ENCODE measurements at regions of chr1 and their contacts with region 1.

Region 1: DNA sequence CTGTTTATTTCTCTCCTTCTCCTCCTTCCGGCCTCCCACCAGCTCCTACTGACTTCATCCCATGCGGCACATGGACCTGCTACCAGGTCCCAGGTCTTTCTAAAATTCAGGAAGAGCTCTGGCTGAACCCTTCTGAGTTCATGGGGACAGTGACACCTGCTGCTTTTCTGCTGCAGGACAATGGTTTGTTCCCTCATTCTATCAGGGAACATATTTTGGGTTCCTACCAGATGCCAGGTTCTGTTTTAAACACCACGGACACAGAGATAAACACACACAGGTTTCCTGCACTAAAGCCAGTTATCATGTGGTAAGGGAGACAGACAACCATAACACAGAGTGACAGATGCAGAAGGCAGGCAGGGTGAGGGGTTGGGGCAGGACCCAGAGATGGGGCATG is 114.0 kb upstream of the RAB4A start:
- H3K4me3 Mint-ChIP-seq: no peak overlapping the region
- H3K27ac Mint-ChIP-seq: peak overlapping the region; percentile 88
- H3K4me1 Mint-ChIP-seq: peaks cover 73% of the 10 kb centered on the region
- H3K27me3 Mint-ChIP-seq: no peaks in the 10 kb centered on the region

Region 2: GRCh38 chr1:228664399-228664914 is 492.4 kb before region 1 on chr1:
- intact Hi-C with region 1: loop called (anchors 1 kb)
- H3K4me3 Mint-ChIP-seq: no peak overlapping the region
- H3K27ac Mint-ChIP-seq: no peak overlapping the region
- H3K4me1 Mint-ChIP-seq: peaks cover 7% of the 10 kb centered on the region
- H3K27me3 Mint-ChIP-seq: peaks cover 20% of the 10 kb centered on the region

Region 3: GRCh38 chr1:228734881-228735801 is 421.7 kb before region 1 on chr1 and contains the start of gene RHOU:
- intact Hi-C with region 1: loop called (anchors 1 kb)
- H3K4me3 Mint-ChIP-seq: peak within 1 kb of the TSS; percentile 92
- H3K27ac Mint-ChIP-seq: peak within 1 kb of the TSS; percentile 84
- H3K4me1 Mint-ChIP-seq: peaks cover 43% of the 10 kb centered on the region
- H3K27me3 Mint-ChIP-seq: peaks cover 4% of the 10 kb centered on the region

Region 4: GRCh38 chr1:228989992-228990827 is 166.7 kb before region 1 on chr1:
- intact Hi-C with region 1: loop called (anchors 5 kb)
- H3K4me3 Mint-ChIP-seq: no peak overlapping the region
- H3K27ac Mint-ChIP-seq: peak overlapping the region; percentile 90
- H3K4me1 Mint-ChIP-seq: peaks cover 93% of the 10 kb centered on the region
- H3K27me3 Mint-ChIP-seq: no peaks in the 10 kb centered on the region

Region 5: DNA sequence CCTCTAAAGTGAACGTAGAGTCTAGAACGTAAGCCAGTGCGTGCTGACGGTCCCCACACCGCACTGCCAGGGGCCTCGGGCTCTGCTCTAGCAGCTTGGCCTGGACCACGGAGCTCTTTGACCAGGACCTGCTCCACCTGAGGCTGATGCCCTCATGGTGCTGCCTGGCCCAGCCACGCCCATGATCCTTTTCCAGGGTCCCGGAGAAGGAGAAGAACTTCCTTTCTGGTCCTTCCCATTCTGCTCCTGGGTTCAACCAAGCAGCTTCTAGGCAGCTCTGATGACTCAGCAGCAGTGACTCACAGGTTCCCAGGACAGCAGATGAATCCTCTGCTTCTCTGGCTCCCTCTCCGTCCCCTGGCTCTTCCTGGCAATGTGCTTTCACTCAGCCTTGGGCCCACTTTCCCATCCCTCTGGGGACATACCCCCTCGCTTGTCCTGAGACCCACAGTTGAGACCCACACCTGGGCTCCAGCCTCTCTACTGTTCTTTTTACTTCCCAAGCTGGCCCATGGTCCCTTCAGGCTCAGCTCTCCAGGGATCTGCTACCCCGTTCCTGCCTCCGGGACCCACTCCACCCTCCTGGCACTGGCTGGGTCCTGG is 132.2 kb before region 1 on chr1:
- intact Hi-C with region 1: no loop called
- H3K4me3 Mint-ChIP-seq: no peak overlapping the region
- H3K27ac Mint-ChIP-seq: peak overlapping the region; percentile 61
- H3K4me1 Mint-ChIP-seq: peaks cover 63% of the 10 kb centered on the region
- H3K27me3 Mint-ChIP-seq: peaks cover 2% of the 10 kb centered on the region

Region 6: DNA sequence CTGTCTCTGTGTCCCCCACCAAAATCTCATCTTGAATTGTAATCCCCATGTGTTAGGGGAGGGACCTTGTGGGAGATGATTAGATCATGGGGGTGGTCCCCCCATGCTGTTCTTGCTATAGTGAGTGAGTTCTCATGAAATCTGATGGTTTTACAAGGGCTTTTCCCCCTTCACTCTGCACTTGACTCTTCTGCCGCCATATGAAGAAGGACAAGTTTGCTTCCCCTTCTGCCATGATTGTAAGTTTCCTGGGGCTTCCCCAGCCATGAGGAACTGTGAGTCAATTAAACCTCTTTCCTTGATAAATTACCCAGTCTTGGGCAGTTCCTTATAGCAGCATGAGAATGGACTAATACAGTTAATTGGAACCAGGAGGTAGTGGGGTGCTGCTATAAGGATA is 23.1 kb before region 1 on chr1:
- intact Hi-C with region 1: loop called (anchors 2 kb)
- H3K4me3 Mint-ChIP-seq: no peak overlapping the region
- H3K27ac Mint-ChIP-seq: peak overlapping the region; percentile 16
- H3K4me1 Mint-ChIP-seq: peaks cover 85% of the 10 kb centered on the region
- H3K27me3 Mint-ChIP-seq: peaks cover 23% of the 10 kb centered on the region

Region 7: DNA sequence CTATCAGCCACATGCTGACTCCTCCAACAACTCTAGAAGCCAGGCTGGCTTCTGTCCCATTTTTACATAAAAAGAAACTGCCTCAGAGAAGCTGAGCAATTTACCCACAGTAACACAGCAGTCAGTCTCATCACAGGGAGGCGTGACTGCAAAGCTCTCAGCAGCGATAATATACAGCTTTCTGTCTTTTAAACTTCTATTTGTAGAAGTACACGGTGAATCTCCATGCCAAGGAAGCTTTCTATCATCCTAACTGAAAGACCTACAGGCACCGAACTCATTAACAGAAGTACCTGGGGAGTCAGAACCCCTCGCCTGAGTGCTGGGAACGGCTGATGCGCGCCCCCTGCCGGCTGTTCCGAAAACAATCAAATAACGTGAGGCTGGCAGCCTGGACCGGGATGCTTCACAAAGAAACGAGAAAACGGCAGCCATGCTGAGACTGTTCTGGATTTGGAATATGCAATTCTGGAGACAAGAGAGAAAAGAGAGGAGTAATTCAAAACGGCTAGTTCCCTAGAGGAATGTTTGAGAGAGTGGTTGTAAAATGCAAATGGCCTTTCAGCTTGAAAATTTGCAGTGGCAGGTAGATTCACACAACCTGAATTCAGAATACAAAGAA is 70.5 kb after region 1 on chr1:
- intact Hi-C with region 1: loop called (anchors 5 kb)
- H3K4me3 Mint-ChIP-seq: no peak overlapping the region
- H3K27ac Mint-ChIP-seq: peak overlapping the region; percentile 49
- H3K4me1 Mint-ChIP-seq: peaks cover 62% of the 10 kb centered on the region
- H3K27me3 Mint-ChIP-seq: peaks cover 5% of the 10 kb centered on the region

Measured in dendritic cell treated with granulocyte-macrophage colony-stimulating factor and Interleukin-4, amounts not matched to agents 40 ng/mL and 50 ng/mL, for 4 days (primary cell).